AG04449 (cell line): ENCODE measurements at regions of chr1 and their contacts with region 1.

Region 1: DNA sequence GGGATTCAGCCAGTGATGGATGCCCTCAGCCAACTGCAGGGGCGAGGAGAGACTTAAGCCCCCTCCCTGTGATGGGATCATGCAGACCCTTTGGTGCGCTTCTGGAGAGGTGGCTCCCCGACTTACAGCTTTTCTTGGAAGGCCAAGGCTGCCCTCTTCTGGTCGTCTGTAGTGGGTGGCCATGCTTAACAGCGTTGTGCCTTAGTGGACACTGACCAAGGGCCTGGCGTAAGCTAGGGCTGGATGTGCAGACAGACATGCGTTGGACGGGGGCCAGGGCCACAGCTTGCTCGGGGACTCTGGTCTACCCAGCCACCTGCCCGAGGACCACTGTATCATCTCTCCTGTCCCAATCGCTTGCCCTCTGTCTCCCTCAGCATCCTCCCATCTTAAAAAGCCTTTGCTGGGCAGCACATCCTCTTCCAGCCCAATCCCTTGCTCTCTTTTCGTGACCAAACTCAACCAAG is 5.5 kb downstream of the AZIN2 start:
- DNase-seq: no peak
- H3K4me3 ChIP-seq: no peak overlapping the region
- CTCF ChIP-seq: peak; percentile 85

Region 2: DNA sequence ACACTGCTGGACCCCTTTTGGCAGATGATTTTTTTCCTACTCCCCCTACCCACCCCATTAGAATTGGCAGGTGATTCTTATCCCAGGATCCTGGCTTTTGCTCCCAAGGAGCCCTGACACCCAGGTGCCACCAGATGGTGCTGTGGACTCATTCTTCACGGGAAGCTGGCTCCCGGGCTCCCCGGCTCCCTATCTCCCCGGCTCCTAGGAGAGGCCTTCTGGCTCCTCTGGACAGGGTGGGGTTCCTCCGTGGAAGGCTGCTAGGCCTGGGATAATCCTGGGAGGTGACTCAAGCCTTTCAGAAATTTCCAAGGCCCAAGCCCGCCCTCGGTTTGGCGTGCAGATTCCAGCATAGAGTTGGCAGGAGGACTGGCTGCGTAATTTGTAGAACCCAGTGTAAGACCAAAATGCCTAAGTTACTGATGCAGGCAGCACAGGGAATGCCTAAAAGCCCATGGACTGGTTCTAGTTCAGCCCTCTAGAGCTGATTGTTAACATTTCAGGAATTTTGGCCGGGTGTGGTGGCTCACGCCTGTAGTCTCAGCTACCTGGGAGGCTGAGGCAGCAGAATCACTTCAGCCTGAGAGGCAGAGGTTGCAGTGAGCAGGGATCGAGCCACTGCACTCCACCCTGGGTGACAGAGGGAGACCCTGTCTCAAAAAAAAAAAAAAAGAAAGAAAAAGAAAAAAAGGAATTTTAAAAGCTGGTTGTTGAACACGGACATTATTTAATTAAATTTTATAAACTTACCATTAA is 685.4 kb before region 1 on chr1:
- CTCF ChIA-PET with region 1: interaction called, 11 read pairs
- POLR2A ChIA-PET with region 1: interaction called, 4 read pairs
- DNase-seq: peak; percentile 31
- H3K4me3 ChIP-seq: no peak overlapping the region
- CTCF ChIP-seq: peak; percentile 84

Region 3: DNA sequence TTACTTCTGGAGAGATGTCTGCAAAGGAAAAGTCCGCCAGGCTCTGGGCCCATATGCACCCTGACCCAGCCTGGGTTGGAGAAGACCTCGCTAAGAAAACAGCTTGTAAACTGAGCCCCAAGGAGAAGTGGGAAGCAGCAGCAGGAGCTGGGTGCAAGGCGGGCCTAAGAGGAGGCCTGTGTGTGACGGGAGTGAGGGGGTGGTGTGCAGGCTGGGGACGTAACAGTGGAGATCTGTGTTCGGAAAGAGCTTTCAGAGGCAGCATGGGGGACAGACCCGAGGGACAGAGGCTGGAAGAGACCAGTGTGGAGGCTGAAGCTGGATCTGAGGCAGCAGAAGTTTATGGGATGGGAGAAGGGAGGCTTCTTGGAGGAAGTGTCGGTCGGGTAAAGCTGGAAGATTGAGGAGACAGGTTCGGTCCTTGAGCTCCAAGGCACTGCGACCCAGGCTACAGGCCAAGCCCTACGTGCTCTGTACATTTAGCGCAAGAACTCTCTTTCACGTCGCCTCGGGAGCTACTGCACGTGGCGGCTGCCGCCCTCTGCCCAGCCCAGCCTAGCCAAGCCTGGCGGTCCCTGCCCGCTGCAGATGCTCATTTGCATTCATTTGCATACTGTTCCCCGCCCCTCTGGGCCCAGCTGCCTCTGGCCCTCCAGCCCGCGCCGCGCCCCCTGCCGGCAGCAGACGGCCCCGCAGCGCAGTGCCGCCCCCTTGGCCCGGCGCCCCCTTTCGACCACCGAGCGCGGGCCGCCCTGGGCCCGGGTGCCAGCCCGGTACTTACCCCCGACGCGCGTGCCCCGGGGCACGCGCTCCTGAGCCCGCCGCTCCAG is 193.8 kb before region 1 on chr1:
- CTCF ChIA-PET with region 1: interaction called, 14 read pairs
- POLR2A ChIA-PET with region 1: no interaction called
- DNase-seq: no peak
- H3K4me3 ChIP-seq: peak overlapping the region; percentile 51
- CTCF ChIP-seq: peak; percentile 56

Region 4: DNA sequence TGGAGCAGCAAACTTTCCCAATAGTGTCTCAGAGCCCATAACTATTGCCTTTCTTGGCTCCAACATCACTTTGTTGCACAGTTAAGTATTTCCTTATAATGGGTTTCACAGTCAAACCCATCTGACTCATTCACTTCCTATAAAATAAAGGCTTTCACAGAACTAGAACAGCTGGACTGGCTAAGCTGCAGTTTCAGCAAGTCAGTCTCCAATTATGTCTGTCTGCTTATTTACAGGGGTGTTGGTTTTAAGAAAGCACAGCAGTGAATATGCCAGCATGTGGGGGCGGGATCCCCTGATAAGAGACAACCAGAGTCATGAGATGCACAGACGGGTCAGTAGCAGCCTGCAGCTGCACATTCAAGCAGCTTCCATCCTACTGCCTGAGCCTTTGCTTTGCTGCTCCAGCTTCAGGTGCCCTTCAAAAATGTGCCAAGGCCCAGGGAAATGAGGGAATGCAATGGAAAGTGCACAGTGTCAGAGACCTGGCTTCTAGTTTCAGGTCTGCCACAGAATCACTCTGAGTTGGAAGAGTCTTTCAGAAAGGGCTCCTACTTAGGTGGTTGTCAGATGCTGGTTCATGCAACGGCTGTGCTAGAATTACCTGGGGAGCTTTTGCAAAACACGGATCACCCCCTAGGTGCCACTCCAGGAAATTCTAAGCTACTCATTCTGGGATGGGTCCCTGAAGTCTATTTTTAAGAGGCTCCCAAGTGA is 146.6 kb before region 1 on chr1:
- CTCF ChIA-PET with region 1: interaction called, 188 read pairs
- POLR2A ChIA-PET with region 1: no interaction called
- DNase-seq: peak; percentile 74
- H3K4me3 ChIP-seq: no peak overlapping the region
- CTCF ChIP-seq: no peak

Region 5: GRCh38 chr1:33074193-33074945 is 12.0 kb before region 1 on chr1:
- CTCF ChIA-PET with region 1: interaction called, 185 read pairs
- POLR2A ChIA-PET with region 1: no interaction called
- DNase-seq: no peak
- H3K4me3 ChIP-seq: no peak overlapping the region
- CTCF ChIP-seq: no peak